A673 (cell line): ENCODE measurements at regions of chr3 and their contacts with region 1.

Region 1: GRCh38 chr3:155594526-155595187 is 150.2 kb downstream of the PLCH1 start:
- DNase-seq: no peak
- H3K4me3 ChIP-seq: no peak overlapping the region
- H3K27ac ChIP-seq: no peak overlapping the region
- H3K4me1 ChIP-seq: peaks cover 17% of the 10 kb centered on the region
- H3K27me3 ChIP-seq: no peaks in the 10 kb centered on the region
- CTCF ChIP-seq: no peak

Region 2: GRCh38 chr3:155018621-155019330 is 575.9 kb before region 1 on chr3:
- CTCF ChIA-PET with region 1: no interaction called
- POLR2A ChIA-PET with region 1: no interaction called
- intact Hi-C with region 1: no loop called
- DNase-seq: no peak
- H3K4me3 ChIP-seq: no peak overlapping the region
- H3K27ac ChIP-seq: no peak overlapping the region
- H3K4me1 ChIP-seq: no peaks in the 10 kb centered on the region
- H3K27me3 ChIP-seq: no peaks in the 10 kb centered on the region
- CTCF ChIP-seq: no peak

Region 3: GRCh38 chr3:155362808-155363689 is 231.6 kb before region 1 on chr3:
- CTCF ChIA-PET with region 1: no interaction called
- POLR2A ChIA-PET with region 1: no interaction called
- intact Hi-C with region 1: loop called (anchors 5 kb)
- DNase-seq: peak; percentile 96
- H3K4me3 ChIP-seq: peak overlapping the region; percentile 8
- H3K27ac ChIP-seq: peak overlapping the region; percentile 86
- H3K4me1 ChIP-seq: peaks cover 25% of the 10 kb centered on the region
- H3K27me3 ChIP-seq: no peaks in the 10 kb centered on the region
- CTCF ChIP-seq: no peak

Region 4: GRCh38 chr3:155423526-155424310 is 170.9 kb before region 1 on chr3:
- CTCF ChIA-PET with region 1: no interaction called
- POLR2A ChIA-PET with region 1: no interaction called
- intact Hi-C with region 1: no loop called
- DNase-seq: no peak
- H3K4me3 ChIP-seq: no peak overlapping the region
- H3K27ac ChIP-seq: no peak overlapping the region
- H3K4me1 ChIP-seq: no peaks in the 10 kb centered on the region
- H3K27me3 ChIP-seq: no peaks in the 10 kb centered on the region
- CTCF ChIP-seq: no peak